Calu3 (cell line): ENCODE measurements at regions of chr1 and their contacts with region 1.

Region 1: DNA sequence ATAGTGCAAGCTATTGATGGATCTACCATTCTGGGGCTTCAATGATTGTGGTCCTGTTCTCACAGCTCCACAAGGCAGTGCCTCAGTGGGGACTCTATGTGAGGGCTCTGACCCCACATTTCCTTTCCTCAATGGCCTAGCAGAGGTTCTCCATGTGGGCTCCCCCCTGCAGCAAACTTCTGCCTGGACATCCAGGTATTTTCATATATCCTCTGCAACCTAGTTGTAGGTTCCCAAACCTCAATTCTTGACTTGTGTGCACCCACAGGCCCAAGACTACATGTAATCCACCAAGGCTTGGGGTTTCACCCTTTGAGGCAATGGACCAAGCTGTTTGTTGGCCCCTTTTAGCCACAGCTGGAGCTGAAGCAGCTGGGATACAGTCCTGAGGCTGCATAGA is 35.9 kb upstream of the CFHR3 start:
- DNase-seq: no peak
- H3K4me3 Mint-ChIP-seq: no peak overlapping the region
- H3K27ac Mint-ChIP-seq: no peak overlapping the region
- H3K4me1 Mint-ChIP-seq: peaks cover 8% of the 10 kb centered on the region
- H3K27me3 Mint-ChIP-seq: no peaks in the 10 kb centered on the region
- CTCF ChIP-seq: no peak

Region 2: GRCh38 chr1:196856053-196856452 is 117.3 kb after region 1 on chr1:
- CTCF ChIA-PET with region 1: no interaction called
- intact Hi-C with region 1: loop called (anchors 5 kb)
- DNase-seq: no peak
- H3K4me3 Mint-ChIP-seq: no peak overlapping the region
- H3K27ac Mint-ChIP-seq: no peak overlapping the region
- H3K4me1 Mint-ChIP-seq: peaks cover 11% of the 10 kb centered on the region
- H3K27me3 Mint-ChIP-seq: no peaks in the 10 kb centered on the region
- CTCF ChIP-seq: no peak

Region 3: DNA sequence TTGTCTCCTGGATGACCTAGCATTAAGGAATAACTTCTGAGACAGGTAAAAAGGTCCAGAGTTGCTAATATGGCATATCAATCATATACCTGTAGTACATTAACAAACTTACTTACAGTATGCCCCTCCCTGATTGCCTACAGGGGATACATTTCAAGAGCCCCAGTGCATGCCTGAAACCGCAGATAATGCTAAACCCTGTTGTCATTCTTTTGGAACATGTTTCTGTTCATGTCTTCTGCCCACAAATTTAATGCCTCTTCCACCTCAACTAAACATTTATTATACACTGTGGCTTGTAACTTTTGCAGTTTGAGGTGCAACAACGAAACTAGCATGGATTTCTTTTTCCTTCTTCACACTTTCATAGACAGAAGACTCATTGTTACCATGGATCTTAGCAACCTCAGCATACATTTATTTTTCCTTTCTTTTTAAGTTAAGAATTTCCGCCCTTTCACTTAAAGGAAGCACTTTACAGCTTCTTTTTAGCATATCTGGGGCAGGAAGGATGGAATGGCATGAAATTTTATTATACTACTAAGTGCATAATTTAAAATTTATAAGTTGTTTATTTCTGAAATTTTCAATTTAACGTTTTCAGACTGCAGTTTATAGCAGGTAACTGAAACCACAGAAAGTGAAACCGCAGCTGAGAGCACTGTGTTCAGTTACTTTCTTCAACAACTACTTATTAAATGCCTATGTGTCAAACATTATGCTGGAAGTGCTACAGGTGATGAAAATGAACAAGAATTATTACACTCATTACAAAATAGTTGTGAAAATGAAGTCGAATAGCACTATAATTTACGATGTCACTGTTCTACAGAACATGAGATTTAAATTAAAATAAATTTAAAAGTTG is 303.0 kb after region 1 on chr1:
- CTCF ChIA-PET with region 1: no interaction called
- intact Hi-C with region 1: no loop called
- DNase-seq: no peak
- H3K4me3 Mint-ChIP-seq: no peak overlapping the region
- H3K27ac Mint-ChIP-seq: no peak overlapping the region
- H3K4me1 Mint-ChIP-seq: peaks cover 10% of the 10 kb centered on the region
- H3K27me3 Mint-ChIP-seq: no peaks in the 10 kb centered on the region
- CTCF ChIP-seq: no peak

Region 4: GRCh38 chr1:197066713-197067456 is 328.2 kb after region 1 on chr1 and contains the start of gene F13B:
- CTCF ChIA-PET with region 1: no interaction called
- intact Hi-C with region 1: loop called (anchors 2 kb)
- DNase-seq: no peak
- H3K4me3 Mint-ChIP-seq: no peak within 1 kb of the TSS
- H3K27ac Mint-ChIP-seq: no peak within 1 kb of the TSS
- H3K4me1 Mint-ChIP-seq: no peaks in the 10 kb centered on the region
- H3K27me3 Mint-ChIP-seq: no peaks in the 10 kb centered on the region
- CTCF ChIP-seq: no peak
- total RNA-seq, gene F13B: not detected in 2 replicates

Region 5: DNA sequence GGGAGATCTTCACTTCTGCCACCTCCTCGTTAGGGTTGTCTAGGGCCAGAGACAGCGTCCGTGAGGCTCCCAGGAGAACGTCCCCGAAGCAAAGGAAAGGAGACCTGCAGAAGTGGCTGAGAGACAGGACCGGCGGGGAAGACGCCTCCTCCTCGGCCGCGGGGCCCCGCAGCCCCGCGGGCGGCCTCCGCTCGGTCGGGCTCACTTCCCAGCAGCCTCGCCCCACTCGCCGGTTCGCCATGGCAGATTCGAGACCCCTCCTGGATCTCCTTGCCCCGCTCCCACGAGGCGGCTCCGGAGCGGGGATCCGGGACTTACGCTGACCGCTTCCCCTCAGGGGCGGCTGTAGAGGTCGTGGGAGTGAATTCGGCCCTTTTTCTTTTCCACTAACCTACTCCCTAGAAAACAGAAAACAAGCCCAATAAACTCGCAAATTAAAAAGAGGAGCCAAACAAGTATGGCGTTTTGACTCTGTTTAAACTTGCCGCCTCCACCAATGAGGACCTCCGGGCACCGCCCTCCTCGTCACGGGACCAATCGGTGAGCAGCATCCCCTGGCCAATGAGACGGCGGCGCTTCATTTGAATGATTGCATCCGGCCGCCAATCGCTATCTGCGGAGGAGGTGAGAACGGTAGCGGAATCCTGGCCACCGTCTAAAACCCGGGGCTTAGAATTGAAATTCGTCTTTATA is 407.6 kb after region 1 on chr1 and contains the start of gene ASPM:
- CTCF ChIA-PET with region 1: no interaction called
- intact Hi-C with region 1: loop called (anchors 10 kb)
- DNase-seq: peak; percentile 97
- H3K4me3 Mint-ChIP-seq: peak within 1 kb of the TSS; percentile 98
- H3K27ac Mint-ChIP-seq: peak within 1 kb of the TSS; percentile 99
- H3K4me1 Mint-ChIP-seq: peaks cover 16% of the 10 kb centered on the region
- H3K27me3 Mint-ChIP-seq: no peaks in the 10 kb centered on the region
- CTCF ChIP-seq: no peak
- total RNA-seq, gene ASPM: 36.3 and 44.0 TPM in 2 replicates